ENCODE measurements at regions of chr18 and their contacts with region 1.

Region 1: DNA sequence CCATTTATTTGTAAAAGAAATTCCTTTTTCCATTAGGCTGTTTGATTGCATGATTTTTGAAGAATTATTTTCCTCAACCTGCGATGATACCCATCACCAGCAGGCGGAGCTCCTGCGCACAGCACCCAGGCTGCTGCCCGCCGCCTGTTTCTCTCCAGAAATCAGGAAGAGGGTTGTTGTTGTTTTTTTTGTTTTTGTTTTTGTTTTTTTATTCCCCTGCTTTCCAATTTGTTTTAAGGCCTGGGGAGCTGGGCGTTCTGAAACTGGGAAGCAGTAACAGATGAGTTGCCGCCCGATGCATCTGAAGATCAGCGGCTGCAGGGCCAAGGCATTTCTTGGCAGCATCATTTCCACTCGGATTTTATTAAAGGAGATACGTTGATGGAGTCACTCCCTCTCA is 132.1 kb downstream of the MBP start:
- DNase-seq: no peak
- H3K4me3 ChIP-seq: peak overlapping the region; percentile 16; the same call in 1 of the 2 replicates
- H3K27me3 ChIP-seq: peaks cover 2% of the 10 kb centered on the region; the same call in 1 of the 2 replicates
- CTCF ChIP-seq: peak; percentile 99

Region 2: DNA sequence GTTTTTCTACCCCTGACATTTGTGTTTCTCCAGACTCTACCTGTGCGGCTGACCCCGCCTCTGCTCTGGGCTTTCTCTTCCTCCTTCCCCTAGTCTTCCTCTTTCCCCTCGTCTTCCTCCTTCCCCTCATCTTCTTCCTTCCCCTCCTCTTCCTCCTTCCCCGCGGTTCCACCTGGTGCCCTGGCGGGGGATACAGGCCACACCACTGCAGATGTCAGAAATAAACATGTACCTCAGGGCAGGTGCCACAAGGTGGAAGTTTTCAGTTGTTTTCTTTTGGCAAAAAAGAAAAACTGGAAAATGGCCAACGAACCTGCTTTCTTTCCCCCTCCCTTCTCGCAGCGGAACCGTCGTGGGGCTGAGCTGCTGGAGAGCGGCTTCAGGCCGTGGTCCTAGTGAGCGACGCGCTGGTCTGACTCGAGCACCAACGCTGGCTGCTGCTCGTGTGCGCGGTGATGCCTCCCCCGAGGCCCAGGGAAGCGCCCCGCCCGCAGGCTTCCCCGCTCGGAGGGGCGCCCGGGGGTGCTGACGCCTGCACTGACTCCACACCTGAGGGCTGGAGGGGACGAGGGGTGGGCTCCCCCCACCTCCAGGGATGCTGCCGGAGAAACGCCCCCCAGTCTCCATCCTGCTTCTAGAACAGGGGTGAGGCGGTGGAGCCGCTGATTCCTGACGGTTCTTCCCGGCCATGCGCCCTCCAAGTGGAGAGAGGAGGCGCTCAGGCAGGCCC is 421.8 kb before region 1 on chr18:
- CTCF ChIA-PET with region 1: no interaction called
- POLR2A ChIA-PET with region 1: no interaction called
- DNase-seq: no peak
- H3K4me3 ChIP-seq: no peak overlapping the region
- H3K27me3 ChIP-seq: peaks cover 2% of the 10 kb centered on the region; the same call in 1 of the 2 replicates
- CTCF ChIP-seq: no peak

Region 3: GRCh38 chr18:77013811-77014521 is 13.4 kb after region 1 on chr18:
- CTCF ChIA-PET with region 1: interaction called, 31 read pairs
- POLR2A ChIA-PET with region 1: no interaction called
- DNase-seq: no peak
- H3K4me3 ChIP-seq: no peak overlapping the region
- H3K27me3 ChIP-seq: 0 out of 2 replicates have a peak, but pooled peaks cover 3% of the 10 kb centered on the region
- CTCF ChIP-seq: no peak

Region 4: GRCh38 chr18:77067291-77068061 is 66.9 kb after region 1 on chr18:
- CTCF ChIA-PET with region 1: interaction called, 16 read pairs
- POLR2A ChIA-PET with region 1: no interaction called
- DNase-seq: peak; percentile 49
- H3K4me3 ChIP-seq: no peak overlapping the region
- H3K27me3 ChIP-seq: no peaks in the 10 kb centered on the region
- CTCF ChIP-seq: 0 out of 2 replicates have a peak, but pooled peaks have one; percentile 16

Region 5: DNA sequence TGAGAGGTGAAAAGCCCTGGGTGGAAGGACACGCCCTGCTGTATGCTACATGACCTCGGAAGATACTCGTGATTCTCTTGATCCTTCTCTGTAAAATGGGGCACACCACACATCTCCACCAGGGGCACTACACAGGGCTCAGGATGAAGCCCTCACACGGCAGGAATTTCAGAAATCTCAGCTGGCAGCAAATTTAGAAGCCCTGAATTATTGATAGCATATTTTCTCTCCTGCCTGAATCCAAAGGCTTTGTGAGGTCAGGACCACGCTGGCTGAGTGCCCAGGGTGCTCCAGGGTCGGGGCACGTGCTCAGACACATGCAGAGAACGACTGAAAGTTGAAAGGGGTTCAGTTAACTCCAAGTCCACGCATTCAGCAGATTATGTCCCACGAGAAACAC is 207.0 kb after region 1 on chr18:
- CTCF ChIA-PET with region 1: interaction called, 215 read pairs
- POLR2A ChIA-PET with region 1: interaction called, 3 read pairs
- DNase-seq: no peak
- H3K4me3 ChIP-seq: no peak overlapping the region
- H3K27me3 ChIP-seq: peaks cover 5% of the 10 kb centered on the region
- CTCF ChIP-seq: peak; percentile 67